Right cardiac atrium (tissue), 5 donors: ENCODE measurements at regions of chr19 and their contacts with region 1.

Region 1: GRCh38 chr19:11446652-11447301 is 11.3 kb downstream of the PRKCSH start:
- DNase-seq: peak; percentile 65 to 89 (median 83)
- ATAC-seq: peak; percentile 70 to 75
- H3K4me3 ChIP-seq: no peak overlapping the region
- H3K27ac ChIP-seq: no peak overlapping the region
- H3K4me1 ChIP-seq: no peaks in the 10 kb centered on the region
- H3K27me3 ChIP-seq: no peaks in the 10 kb centered on the region

Region 2: DNA sequence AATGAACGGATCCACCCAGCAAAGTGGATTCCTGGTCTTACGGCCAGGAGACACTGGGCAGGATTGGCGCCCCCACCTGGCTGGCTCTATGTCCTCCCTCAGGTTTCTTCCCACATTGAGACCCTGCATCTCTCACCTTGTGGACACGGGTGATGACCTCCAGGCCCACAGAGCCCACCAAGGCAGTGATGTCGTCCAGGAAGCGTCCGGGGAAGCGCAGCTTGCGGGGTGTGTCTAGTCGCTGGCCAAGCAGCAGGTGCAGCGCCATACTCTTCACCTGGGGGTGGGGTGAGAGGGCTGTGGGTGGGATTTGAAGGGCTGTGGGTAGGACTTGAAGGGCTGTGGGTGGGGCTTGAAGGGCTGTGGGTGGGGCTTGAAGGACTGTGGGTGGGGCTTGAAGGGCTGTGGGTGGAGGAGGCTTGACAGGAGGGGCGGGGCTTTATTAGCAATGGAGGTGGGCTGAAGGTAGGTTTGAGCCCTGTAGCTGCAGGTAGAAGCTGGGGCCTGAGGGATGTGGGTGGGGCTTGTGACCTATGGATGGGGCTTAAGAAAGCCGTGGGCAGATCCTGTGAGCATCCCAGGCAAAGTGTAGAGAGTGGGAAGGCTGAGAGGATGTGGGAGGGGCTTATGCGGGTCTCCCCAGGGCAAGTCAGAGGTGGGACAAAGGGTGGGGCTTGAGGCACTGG is 219.4 kb before region 1 on chr19:
- intact Hi-C with region 1: loop called in 1 of 4 experiments (anchors 10 kb)
- DNase-seq: peak in 1 of 3 donors; percentile 36
- ATAC-seq: peak in 1 of 2 donors; percentile 36
- H3K4me3 ChIP-seq: no peak overlapping the region
- H3K27ac ChIP-seq: no peak overlapping the region
- H3K4me1 ChIP-seq: no peaks in the 10 kb centered on the region
- H3K27me3 ChIP-seq: no peaks in the 10 kb centered on the region

Region 3: DNA sequence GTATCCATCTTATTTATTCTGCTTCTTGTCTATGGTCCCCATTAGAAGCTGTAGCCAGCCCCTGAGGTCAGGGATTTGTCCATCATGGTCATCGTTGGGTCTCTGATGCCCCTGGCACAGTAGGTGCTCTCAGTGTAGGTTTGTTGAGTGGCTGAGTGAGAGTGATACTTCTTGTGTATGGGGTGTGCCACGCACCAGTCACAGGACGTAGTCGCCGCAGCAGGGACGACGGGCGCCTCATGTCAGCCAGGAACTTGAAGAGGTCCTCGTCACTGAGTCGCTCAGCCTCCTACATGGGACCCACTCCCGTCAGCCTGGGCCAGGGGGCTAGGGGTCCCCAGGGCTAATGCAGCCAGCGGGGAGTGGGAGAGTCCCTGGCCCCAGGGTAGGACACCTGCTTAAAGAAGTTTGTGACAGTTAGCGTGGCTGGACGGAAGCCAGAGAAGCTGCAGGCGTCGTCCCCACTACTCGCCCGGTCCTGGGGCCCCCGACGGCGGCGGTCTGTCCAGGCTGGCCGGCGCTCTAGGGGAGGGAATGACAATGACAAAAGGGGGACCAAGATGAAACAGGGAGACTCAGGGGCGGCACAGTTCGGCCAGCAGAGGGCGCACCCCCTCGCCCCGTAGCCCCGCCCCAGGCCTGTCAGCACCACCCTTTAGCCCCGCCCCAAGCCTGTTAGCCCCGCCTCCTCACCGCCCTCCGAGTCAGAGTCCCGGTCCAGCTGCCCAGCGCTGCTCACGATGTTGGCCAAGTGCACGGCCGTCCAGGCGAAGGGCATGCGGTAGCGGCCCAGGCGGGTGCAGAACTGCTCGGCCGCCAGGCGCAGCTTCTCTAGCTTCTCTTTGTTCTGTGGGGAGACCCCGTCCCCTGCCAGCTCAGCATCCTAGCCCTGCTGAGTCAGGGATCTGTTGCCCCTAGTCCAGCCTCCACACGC is 203.6 kb before region 1 on chr19:
- intact Hi-C with region 1: loop called in 1 of 4 experiments (anchors 5 kb)
- DNase-seq: peak; percentile 95 to 99 (median 98)
- ATAC-seq: peak; percentile 89 to 91
- H3K4me3 ChIP-seq: no peak overlapping the region
- H3K27ac ChIP-seq: peak overlapping the region; percentile 27
- H3K4me1 ChIP-seq: peaks cover 4% of the 10 kb centered on the region
- H3K27me3 ChIP-seq: no peaks in the 10 kb centered on the region

Region 4: DNA sequence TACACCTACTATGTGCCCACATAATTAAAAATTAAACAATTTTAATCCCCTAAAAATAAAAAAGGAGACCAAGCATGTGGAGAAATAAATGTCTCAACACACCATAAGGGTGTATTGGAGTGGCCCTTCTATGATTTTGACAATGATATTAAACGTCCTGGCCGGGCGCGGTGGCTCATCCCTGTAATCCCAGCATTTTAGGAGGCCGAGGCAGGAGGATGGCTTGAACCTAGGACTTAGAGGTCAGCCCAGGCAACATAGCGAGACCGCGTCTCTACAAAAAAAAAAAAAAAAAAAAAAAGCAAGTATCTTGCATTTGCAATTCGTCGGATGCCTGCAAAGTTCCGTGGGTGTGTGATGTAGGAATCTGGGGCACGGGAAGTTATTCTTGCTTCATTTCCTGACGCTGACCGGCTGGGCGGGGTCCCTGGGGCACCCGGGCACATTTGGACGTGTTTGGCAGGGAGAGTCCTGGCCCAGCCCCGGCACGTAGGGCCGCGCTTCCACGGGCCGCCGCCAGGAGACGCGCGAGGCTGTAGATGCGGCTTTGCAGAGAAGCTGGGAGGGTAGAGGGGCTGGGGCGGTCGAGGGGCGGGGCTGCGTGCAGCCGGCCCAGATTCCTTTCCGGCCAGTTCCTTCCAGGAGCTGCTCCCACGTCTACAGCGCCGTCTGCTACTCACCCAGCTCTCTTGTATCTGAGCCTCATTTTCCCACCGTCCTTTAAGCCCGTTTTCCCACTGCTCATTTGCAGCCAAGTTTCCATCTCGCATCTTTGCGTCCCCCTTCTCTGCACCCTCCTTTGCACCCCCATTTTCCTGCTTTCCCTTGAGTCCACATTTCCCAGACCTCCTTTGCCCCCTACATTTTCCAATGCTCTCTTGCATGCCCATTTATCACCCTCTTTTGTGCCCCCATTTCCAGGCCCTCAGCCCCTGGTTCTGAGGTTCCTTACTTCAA is 153.1 kb before region 1 on chr19:
- intact Hi-C with region 1: loop called (anchors 5 to 10 kb)
- DNase-seq: peak; percentile 97 to 99 (median 99)
- ATAC-seq: peak; percentile 97
- H3K4me3 ChIP-seq: peak overlapping the region; percentile 21
- H3K27ac ChIP-seq: peak overlapping the region; percentile 77
- H3K4me1 ChIP-seq: peaks cover 2% of the 10 kb centered on the region
- H3K27me3 ChIP-seq: no peaks in the 10 kb centered on the region

Region 5: DNA sequence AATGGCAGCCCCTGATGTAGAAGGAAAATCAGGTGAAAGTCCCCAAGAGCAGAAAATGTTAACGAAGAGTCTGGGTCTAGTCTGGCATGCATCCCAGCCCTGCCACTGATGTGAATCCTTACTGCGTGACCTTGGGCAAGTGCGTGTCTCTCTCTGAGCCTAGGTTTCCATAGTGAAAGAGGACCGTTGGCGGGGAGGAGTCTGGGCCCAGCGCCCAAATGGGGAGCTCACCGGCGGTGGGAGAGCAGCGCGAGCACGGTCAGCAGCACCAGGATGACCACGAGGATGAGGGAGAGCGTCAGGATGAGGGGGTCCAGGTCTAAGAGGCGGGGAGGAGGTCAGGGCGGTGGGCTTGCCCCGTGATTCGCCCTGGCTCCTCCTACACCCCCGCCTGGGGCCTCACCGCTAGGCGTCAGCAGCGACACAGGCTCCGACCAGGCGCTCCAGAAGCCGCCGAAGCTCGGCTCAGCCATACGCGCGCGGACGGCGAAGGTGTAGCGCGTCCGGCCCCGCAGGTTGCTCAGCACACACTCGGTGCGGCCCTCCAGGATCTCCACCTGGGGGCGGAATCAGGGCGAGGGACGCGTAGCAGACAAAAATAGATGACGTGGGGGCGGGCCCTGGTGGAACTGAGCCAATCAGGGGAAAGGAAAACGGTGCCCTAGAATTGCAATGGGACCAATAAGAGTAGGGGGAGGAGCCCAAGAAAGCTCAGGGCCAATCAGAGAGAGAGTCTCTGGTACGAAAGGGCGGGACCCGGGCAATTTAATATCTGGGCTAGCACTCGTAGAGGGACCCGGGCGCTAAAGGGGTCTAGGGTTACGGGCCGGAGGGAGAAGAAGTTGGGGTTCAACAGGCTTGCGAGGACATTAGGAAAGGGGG is 65.9 kb before region 1 on chr19:
- intact Hi-C with region 1: loop called in 1 of 4 experiments (anchors 10 kb)
- DNase-seq: peak; percentile 93 to 97 (median 96)
- ATAC-seq: peak; percentile 88 to 90
- H3K4me3 ChIP-seq: peak overlapping the region; percentile 47
- H3K27ac ChIP-seq: peak overlapping the region; percentile 46
- H3K4me1 ChIP-seq: peaks cover 8% of the 10 kb centered on the region
- H3K27me3 ChIP-seq: no peaks in the 10 kb centered on the region

Region 6: DNA sequence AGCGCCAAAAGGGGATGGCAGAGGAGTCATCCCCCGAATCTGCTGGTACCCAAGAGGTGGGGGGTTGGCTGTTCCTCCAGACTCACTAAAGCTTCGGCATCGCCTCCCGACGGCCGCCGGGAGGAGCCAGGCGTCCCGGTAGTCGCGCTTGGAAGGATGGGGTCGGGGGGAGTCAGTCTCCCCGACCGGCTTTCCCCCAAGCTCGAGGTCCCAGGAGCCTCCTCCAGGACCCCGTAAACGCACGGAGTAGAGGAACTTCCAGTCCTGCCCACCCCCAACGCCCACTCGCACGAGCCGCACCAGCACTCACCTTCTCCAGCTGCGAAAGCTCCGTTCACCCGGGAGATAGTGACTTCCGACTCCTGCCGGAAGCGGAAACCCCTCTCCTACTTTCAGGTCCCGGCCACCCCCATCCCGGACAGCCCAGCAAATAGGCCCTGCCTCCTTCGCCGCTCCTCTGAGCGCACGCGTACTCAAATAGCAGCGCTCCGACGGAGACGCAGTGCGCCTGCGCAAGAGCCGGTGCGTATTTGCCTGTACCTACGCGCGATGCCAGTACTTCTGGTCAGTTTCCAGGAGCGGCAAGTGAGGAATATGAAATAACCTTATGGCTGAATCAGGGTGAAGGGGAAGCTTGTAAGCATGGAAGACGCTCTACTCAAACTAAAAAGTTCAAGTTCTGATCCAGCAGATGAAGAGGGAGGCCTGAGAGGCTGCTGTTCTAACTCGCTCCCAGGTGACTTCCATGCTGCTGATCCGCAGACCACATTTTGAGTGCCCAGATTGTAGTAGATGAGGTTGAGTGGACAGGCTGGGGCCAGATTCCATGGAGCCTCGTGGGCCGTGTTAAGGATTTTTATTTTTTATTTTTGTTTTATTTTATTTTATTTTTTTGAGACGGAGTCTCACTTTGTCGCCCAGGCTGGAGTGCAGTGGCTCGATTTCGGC is 112.4 kb after region 1 on chr19 and contains the start of gene ELOF1:
- intact Hi-C with region 1: no loop called
- DNase-seq: peak; percentile 98 to 99 (median 99)
- ATAC-seq: peak; percentile 98
- H3K4me3 ChIP-seq: peak within 1 kb of the TSS; percentile 93
- H3K27ac ChIP-seq: peak within 1 kb of the TSS; percentile 77
- H3K4me1 ChIP-seq: peaks cover 5% of the 10 kb centered on the region
- H3K27me3 ChIP-seq: no peaks in the 10 kb centered on the region
- total RNA-seq, gene ELOF1: 35.2 to 47.4 (median 41.0) TPM